ENCODE measurements at regions of chr1 and their contacts with region 1.

Region 1: GRCh38 chr1:176017722-176018121 is 189.4 kb downstream of the COP1 start:
- DNase-seq: peak; percentile 29
- H3K4me3 ChIP-seq: no peak overlapping the region
- H3K27ac ChIP-seq: peak overlapping the region; percentile 57
- H3K4me1 ChIP-seq: peaks cover 14% of the 10 kb centered on the region
- CTCF ChIP-seq: no peak

Region 2: GRCh38 chr1:175865041-175865766 is 152.5 kb before region 1 on chr1:
- CTCF ChIA-PET with region 1: no interaction called
- POLR2A ChIA-PET with region 1: no interaction called
- intact Hi-C with region 1: no loop called
- DNase-seq: no peak
- H3K4me3 ChIP-seq: no peak overlapping the region
- H3K27ac ChIP-seq: no peak overlapping the region
- H3K4me1 ChIP-seq: no peaks in the 10 kb centered on the region
- CTCF ChIP-seq: no peak

Region 3: GRCh38 chr1:176032040-176032645 is 14.4 kb after region 1 on chr1:
- CTCF ChIA-PET with region 1: no interaction called
- POLR2A ChIA-PET with region 1: interaction called, 11 read pairs
- intact Hi-C with region 1: no loop called
- DNase-seq: no peak
- H3K4me3 ChIP-seq: no peak overlapping the region
- H3K27ac ChIP-seq: no peak overlapping the region
- H3K4me1 ChIP-seq: no peaks in the 10 kb centered on the region
- CTCF ChIP-seq: no peak

Region 4: DNA sequence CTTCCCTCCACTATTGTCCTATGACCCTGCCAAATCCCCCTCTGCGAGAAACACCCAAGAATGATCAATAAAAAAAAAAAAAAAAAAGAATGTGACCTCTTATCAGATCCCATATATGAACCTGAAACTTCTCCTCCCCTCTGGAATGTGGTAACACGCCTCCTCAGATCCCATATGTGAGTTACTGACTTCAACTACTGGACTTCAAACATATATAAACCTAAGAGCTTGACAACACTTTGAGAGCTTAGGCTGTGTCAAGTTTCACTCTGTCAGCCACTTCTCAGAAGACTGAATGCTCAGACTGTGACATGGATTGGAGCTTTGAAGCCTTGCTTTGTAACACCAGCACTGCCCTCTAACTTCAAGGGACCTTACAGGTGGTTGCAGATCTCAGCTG is 41.0 kb after region 1 on chr1:
- CTCF ChIA-PET with region 1: no interaction called
- POLR2A ChIA-PET with region 1: no interaction called
- intact Hi-C with region 1: no loop called
- DNase-seq: peak; percentile 4
- H3K4me3 ChIP-seq: no peak overlapping the region
- H3K27ac ChIP-seq: no peak overlapping the region
- H3K4me1 ChIP-seq: no peaks in the 10 kb centered on the region
- CTCF ChIP-seq: no peak